CD8-positive, alpha-beta T cell (primary cell): ENCODE measurements at regions of chr2 and their contacts with region 1.

Region 1: GRCh38 chr2:191691016-191691735 is 13.2 kb downstream of the NABP1 start:
- DNase-seq: peak in 7 of 9 experiments; percentile 9 to 85 (median 48)
- ATAC-seq: peak; percentile 93
- H3K4me3 ChIP-seq: no peak overlapping the region
- H3K4me3 Mint-ChIP-seq: no peak overlapping the region
- H3K27ac ChIP-seq: no peak overlapping the region
- H3K27ac Mint-ChIP-seq: peak overlapping the region; percentile 65
- H3K4me1 ChIP-seq: peaks cover 7% of the 10 kb centered on the region
- H3K4me1 Mint-ChIP-seq: peaks cover 10% of the 10 kb centered on the region
- H3K27me3 ChIP-seq: no peaks in the 10 kb centered on the region
- H3K27me3 Mint-ChIP-seq: no peaks in the 10 kb centered on the region
- CTCF ChIP-seq: peak; percentile 81

Region 2: DNA sequence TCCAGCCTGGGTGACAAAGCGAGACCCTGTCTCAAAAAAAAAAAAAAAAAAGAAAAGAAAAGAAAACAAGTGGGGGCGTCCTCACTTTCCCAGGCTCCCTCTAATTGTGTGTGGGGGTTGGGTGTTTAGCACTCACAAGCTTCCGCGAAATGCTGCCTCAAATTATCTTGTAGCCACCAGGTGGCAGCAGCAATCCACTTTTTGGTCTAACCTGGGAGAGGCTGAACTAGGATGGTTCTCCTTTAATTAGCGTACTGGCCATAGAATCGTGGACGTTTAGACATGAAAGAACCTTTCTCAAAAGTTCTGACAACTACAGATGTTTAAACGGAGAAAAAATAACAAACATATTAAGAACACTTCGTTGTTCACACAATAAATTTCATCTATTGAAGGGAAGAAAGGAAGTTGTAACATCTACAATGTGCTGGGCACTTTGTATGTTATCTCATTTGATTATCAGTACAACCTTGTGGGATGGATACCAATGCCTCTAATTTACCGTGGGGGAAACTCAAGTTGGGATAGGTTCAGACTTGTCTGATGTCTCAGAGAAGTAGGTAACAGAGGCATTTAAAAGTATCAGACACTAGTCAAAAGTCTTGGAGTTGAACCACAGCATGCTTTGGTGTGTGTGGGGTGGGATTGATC is 136.0 kb before region 1 on chr2:
- CTCF ChIA-PET with region 1: interaction called, 23 read pairs
- POLR2A ChIA-PET with region 1: no interaction called
- intact Hi-C with region 1: loop called in 1 of 2 experiments (anchors 1 kb)
- DNase-seq: peak; percentile 62 to 85 (median 80)
- ATAC-seq: peak; percentile 75
- H3K4me3 ChIP-seq: no peak overlapping the region
- H3K4me3 Mint-ChIP-seq: no peak overlapping the region
- H3K27ac ChIP-seq: no peak overlapping the region
- H3K27ac Mint-ChIP-seq: no peak overlapping the region
- H3K4me1 ChIP-seq: no peaks in the 10 kb centered on the region
- H3K4me1 Mint-ChIP-seq: peaks cover 4% of the 10 kb centered on the region
- H3K27me3 ChIP-seq: no peaks in the 10 kb centered on the region
- H3K27me3 Mint-ChIP-seq: peaks cover 15% of the 10 kb centered on the region
- CTCF ChIP-seq: peak; percentile 87

Region 3: DNA sequence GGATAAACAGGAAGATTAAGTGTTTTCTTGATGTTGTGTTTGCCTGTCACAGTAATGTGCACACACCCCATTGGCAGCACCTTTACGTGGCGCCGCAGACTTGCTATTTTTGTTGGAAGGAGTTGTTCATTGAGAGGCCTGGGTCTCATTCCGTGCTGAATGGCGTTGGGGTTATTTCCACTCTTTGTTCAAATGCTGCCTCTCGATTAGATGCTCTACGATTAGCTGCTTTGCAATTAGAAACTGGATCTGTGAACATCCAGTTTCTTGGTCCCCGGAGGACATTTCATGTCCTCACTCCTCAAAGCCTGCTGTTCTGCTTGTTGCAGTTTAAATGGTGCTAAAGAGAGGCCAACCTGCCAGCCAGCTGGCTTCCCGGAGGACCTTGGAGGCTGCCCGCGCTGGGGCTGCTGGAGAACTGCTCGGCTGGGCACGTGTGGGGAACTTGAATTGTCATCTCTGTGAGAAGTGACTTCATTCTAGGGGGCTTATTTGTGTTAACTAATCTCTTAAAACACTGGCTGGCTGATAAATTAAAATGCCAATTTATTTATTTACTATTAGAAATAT is 130.7 kb before region 1 on chr2:
- CTCF ChIA-PET with region 1: interaction called, 70 read pairs
- POLR2A ChIA-PET with region 1: interaction called, 3 read pairs
- intact Hi-C with region 1: loop called in 1 of 2 experiments (anchors 1 kb)
- DNase-seq: no peak
- ATAC-seq: no peak
- H3K4me3 ChIP-seq: no peak overlapping the region
- H3K4me3 Mint-ChIP-seq: no peak overlapping the region
- H3K27ac ChIP-seq: no peak overlapping the region
- H3K27ac Mint-ChIP-seq: no peak overlapping the region
- H3K4me1 ChIP-seq: no peaks in the 10 kb centered on the region
- H3K4me1 Mint-ChIP-seq: peaks cover 1% of the 10 kb centered on the region
- H3K27me3 ChIP-seq: peaks cover 0 to 3% of the 10 kb centered on the region in 2 experiments
- H3K27me3 Mint-ChIP-seq: peaks cover 24% of the 10 kb centered on the region
- CTCF ChIP-seq: no peak

Region 4: DNA sequence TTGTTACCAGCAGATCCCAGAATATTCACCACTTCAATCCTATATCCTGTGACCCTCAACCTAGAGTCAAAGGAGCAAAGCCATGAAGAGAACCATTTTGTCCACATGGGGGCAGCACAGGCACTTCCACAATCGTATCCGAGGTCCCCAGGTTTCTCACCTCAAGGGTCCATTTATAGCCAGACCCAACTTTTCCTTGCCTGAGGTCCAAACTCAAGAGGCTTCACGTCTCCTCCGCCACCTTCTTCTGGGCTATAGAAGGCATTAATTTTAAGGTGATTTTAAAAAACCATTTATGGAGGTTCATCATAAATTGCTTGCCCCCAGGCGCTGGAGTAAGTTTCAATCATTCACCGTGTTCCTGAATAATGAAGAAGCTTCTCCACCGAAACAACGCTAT is 124.8 kb before region 1 on chr2:
- CTCF ChIA-PET with region 1: interaction called, 70 read pairs
- POLR2A ChIA-PET with region 1: interaction called, 3 read pairs
- intact Hi-C with region 1: loop called (anchors 1 kb)
- DNase-seq: peak; percentile 33 to 81 (median 72)
- ATAC-seq: peak; percentile 55
- H3K4me3 ChIP-seq: no peak overlapping the region
- H3K4me3 Mint-ChIP-seq: no peak overlapping the region
- H3K27ac ChIP-seq: no peak overlapping the region
- H3K27ac Mint-ChIP-seq: no peak overlapping the region
- H3K4me1 ChIP-seq: peaks cover 11% of the 10 kb centered on the region
- H3K4me1 Mint-ChIP-seq: peaks cover 18% of the 10 kb centered on the region
- H3K27me3 ChIP-seq: peaks cover 0 to 12% of the 10 kb centered on the region in 2 experiments
- H3K27me3 Mint-ChIP-seq: peaks cover 29% of the 10 kb centered on the region
- CTCF ChIP-seq: peak; percentile 80

Region 5: GRCh38 chr2:191632426-191632825 is 58.8 kb before region 1 on chr2:
- CTCF ChIA-PET with region 1: no interaction called
- POLR2A ChIA-PET with region 1: no interaction called
- intact Hi-C with region 1: no loop called
- DNase-seq: no peak
- ATAC-seq: no peak
- H3K4me3 ChIP-seq: no peak overlapping the region
- H3K4me3 Mint-ChIP-seq: no peak overlapping the region
- H3K27ac ChIP-seq: no peak overlapping the region
- H3K27ac Mint-ChIP-seq: no peak overlapping the region
- H3K4me1 ChIP-seq: peaks cover 15% of the 10 kb centered on the region
- H3K4me1 Mint-ChIP-seq: peaks cover 24% of the 10 kb centered on the region
- H3K27me3 ChIP-seq: no peaks in the 10 kb centered on the region
- H3K27me3 Mint-ChIP-seq: no peaks in the 10 kb centered on the region
- CTCF ChIP-seq: no peak

Region 6: DNA sequence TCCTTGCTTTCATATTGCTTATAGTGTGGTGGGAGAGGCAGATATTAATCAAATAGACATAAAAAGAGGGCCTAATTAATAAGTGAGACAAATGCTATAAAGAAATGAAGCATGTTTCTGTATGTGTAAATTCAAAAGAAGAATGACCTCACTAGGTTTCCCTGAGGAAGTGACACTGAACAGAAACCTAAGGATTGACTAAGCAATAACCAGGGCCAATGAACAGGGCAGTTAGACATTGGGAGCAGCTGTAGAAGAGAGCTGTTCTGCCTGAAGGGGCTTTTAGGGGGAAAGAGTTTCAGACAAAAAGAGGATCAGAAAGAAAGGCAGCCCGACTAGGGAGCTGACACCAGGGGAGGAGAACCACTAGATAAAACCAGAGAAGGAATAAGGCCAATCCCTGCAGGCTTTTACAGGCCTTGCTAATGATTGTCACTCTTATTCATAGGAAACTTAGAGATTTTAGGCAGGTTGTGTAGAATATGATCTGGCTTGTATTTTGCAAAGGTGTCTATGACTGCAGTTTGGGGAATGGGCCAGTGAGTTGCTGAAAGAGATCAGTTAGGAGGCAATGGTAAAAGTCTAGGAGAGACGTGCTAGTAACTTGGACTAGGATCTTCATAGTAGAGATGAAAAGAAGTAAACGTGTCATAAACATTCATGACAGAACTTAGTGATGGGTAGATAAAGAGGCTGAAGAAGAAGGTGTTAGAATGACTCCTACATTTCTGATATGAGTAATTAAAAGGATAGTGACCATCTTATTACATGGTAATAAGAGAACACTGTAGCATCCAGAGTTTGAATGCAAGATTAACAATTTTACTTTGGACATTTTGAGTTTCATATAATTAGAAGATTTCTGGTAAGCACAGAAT is 40.0 kb before region 1 on chr2:
- CTCF ChIA-PET with region 1: no interaction called
- POLR2A ChIA-PET with region 1: no interaction called
- intact Hi-C with region 1: loop called in 1 of 2 experiments (anchors 5 kb)
- DNase-seq: no peak
- ATAC-seq: no peak
- H3K4me3 ChIP-seq: no peak overlapping the region
- H3K4me3 Mint-ChIP-seq: no peak overlapping the region
- H3K27ac ChIP-seq: no peak overlapping the region
- H3K27ac Mint-ChIP-seq: no peak overlapping the region
- H3K4me1 ChIP-seq: no peaks in the 10 kb centered on the region
- H3K4me1 Mint-ChIP-seq: no peaks in the 10 kb centered on the region
- H3K27me3 ChIP-seq: no peaks in the 10 kb centered on the region
- H3K27me3 Mint-ChIP-seq: no peaks in the 10 kb centered on the region
- CTCF ChIP-seq: no peak